Activated CD8-positive, alpha-beta memory T cell treated with anti-CD3 and anti-CD28 coated beads, Interleukin-2, amount 10 ng/mL, durations not matched to agents 7 days and 5 days (primary cell): ENCODE measurements at regions of chr6 and their contacts with region 1.

Region 1: GRCh38 chr6:109455502-109456282 is at the start of gene MICAL1:
- DNase-seq: peak; percentile 88
- ATAC-seq: peak; percentile 74
- H3K4me3 Mint-ChIP-seq: peak within 1 kb of the TSS; percentile 88
- H3K27ac Mint-ChIP-seq: peak within 1 kb of the TSS; percentile 97
- H3K4me1 Mint-ChIP-seq: peaks cover 68% of the 10 kb centered on the region
- H3K27me3 Mint-ChIP-seq: no peaks in the 10 kb centered on the region
- total RNA-seq, gene MICAL1: 86.0 to 93.1 TPM

Region 2: GRCh38 chr6:109187399-109188114 is 268.1 kb before region 1 on chr6:
- CTCF ChIA-PET with region 1: interaction called, 21 read pairs
- DNase-seq: peak; percentile 67
- ATAC-seq: peak; percentile 65
- H3K4me3 Mint-ChIP-seq: no peak overlapping the region
- H3K27ac Mint-ChIP-seq: no peak overlapping the region
- H3K4me1 Mint-ChIP-seq: peaks cover 20% of the 10 kb centered on the region
- H3K27me3 Mint-ChIP-seq: peaks cover 46% of the 10 kb centered on the region

Region 3: GRCh38 chr6:109382576-109383437 is 72.9 kb before region 1 on chr6:
- CTCF ChIA-PET with region 1: interaction called, 10 read pairs
- DNase-seq: peak; percentile 95
- ATAC-seq: peak; percentile 70
- H3K4me3 Mint-ChIP-seq: peak overlapping the region; percentile 92
- H3K27ac Mint-ChIP-seq: peak overlapping the region; percentile 100
- H3K4me1 Mint-ChIP-seq: peaks cover 24% of the 10 kb centered on the region
- H3K27me3 Mint-ChIP-seq: no peaks in the 10 kb centered on the region

Region 4: GRCh38 chr6:109440331-109441068 is 15.2 kb before region 1 on chr6 and contains the starts of genes PPIL6 and SMPD2:
- CTCF ChIA-PET with region 1: interaction called, 40 read pairs
- DNase-seq: peak; percentile 84
- ATAC-seq: peak; percentile 93
- H3K4me3 Mint-ChIP-seq: peak within 1 kb of the TSS; percentile 88
- H3K27ac Mint-ChIP-seq: peak within 1 kb of the TSS; percentile 77
- H3K4me1 Mint-ChIP-seq: peaks cover 29% of the 10 kb centered on the region
- H3K27me3 Mint-ChIP-seq: no peaks in the 10 kb centered on the region
- total RNA-seq, gene PPIL6: 0.21 TPM in 1 of 2 experiments, not detected in the other
- total RNA-seq, gene SMPD2: 14.3 to 14.6 TPM

Region 5: DNA sequence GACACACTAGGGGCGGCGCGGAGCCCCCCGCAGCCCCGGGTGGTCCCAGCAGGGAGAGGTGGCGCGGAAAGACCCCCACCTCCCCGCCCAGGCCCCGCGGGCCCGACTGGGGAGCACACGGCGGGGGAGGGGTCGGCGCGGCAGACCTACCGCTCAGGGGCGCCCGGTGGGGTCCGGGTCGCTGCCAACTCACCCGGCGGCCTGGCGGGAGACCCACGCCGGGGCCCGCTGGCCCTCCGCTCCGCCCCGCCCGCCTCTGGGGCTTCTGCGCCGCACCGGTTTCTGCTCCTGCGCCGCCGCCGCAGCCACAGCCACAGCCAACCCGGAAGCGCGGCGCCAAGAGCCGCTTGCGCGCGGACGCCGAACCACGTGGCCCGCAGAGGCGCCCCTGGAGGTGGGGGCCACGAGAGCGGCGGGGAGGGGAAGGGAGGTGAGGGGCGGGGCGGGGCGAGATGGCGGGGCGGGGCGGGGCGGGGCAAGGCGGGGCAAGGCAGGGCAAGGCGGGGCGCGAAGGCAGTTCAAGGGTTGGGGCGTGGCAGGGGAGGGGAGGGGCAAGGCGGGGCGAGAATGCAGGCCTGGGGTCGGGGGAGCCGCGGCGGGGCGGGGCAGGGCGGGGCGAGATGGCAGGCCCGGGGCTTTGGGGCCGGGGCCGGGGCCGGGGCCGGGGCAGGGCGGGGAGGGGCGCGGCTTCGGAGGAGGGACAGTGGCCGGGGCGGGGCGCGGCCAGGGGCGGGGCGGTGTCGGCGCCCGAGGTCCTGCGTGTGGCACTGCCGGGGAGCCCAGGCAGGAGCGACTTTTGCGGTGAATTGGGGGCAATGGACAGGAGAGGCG is 27.4 kb after region 1 on chr6 and contains the start of gene ZBTB24:
- CTCF ChIA-PET with region 1: interaction called, 14 read pairs
- DNase-seq: peak; percentile 90
- ATAC-seq: peak; percentile 85
- H3K4me3 Mint-ChIP-seq: peak within 1 kb of the TSS; percentile 98
- H3K27ac Mint-ChIP-seq: peak within 1 kb of the TSS; percentile 92
- H3K4me1 Mint-ChIP-seq: peaks cover 44% of the 10 kb centered on the region
- H3K27me3 Mint-ChIP-seq: peaks cover 8% of the 10 kb centered on the region
- total RNA-seq, gene ZBTB24: 17.5 to 22.7 TPM